ENCODE measurements at regions of chr12 and their contacts with region 1.

Region 1: DNA sequence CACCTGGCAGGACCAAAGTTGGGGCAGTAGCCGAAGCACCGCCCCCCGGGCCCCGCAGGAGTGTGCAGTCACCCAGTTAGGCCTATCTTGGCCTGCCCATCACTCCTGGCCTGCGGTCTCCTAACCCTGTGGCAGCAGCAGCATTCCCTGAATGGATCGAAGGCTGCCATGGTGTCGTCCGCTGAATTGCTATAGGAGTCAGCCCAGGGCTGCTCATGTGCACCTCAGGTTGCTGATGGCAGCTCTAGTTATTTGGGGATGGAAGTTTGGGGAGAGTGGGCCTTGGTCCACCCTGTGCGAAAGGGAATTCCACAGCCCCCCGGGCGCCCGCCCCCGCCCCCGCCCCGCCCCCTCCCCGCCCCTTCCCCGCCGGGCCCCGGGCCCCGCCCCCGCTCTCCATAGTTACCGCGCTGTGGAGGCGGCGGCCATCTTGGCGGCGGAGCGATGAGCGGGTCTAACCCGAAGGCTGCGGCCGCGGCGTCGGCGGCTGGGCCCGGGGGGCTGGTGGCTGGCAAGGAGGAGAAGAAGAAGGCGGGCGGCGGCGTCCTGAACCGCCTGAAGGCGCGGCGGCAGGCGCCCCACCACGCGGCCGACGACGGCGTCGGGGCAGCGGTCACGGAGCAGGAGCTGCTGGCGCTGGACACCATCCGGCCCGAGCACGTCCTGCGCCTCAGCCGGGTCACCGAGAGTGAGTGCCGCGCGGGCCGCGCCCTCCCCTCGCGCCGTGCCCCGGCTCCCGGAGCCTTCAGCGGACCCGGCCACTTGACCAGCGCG is at the start of gene UNC119B:
- DNase-seq: peak; percentile 72 to 79
- ATAC-seq: peak; percentile 85 to 95 (median 92)
- H3K4me3 ChIP-seq: peak within 1 kb of the TSS; percentile 50 to 96 (median 88)
- H3K27ac ChIP-seq: peak within 1 kb of the TSS; percentile 75 to 96 (median 92)
- H3K4me1 ChIP-seq: peaks cover 9 to 43% (median 31%) of the 10 kb centered on the region in 9 donors
- H3K27me3 ChIP-seq: no peaks in the 10 kb centered on the region
- CTCF ChIP-seq: no peak
- total RNA-seq, gene UNC119B: 5.9 to 15.4 (median 9.6) TPM

Region 2: GRCh38 chr12:120495723-120496412 is 214.3 kb before region 1 on chr12 and contains the start of gene DYNLL1:
- intact Hi-C with region 1: loop called in 1 of 10 experiments (anchors 5 kb)
- DNase-seq: peak; percentile 96 to 97
- ATAC-seq: peak; percentile 98 to 99 (median 99)
- H3K4me3 ChIP-seq: peak within 1 kb of the TSS; percentile 72 to 99 (median 96)
- H3K27ac ChIP-seq: peak within 1 kb of the TSS; percentile 24 to 97 (median 93)
- H3K4me1 ChIP-seq: peaks cover 6 to 38% (median 28%) of the 10 kb centered on the region in 9 donors
- H3K27me3 ChIP-seq: no peaks in the 10 kb centered on the region
- CTCF ChIP-seq: no peak
- total RNA-seq, gene DYNLL1: 94.0 to 227 (median 120) TPM

Region 3: GRCh38 chr12:120649442-120650232 is 60.6 kb before region 1 on chr12:
- intact Hi-C with region 1: loop called in 9 of 10 experiments (anchors 1 to 5 kb)
- DNase-seq: peak; percentile 16 to 51
- ATAC-seq: peak in 4 of 8 donors; percentile 1 to 29 (median 5)
- H3K4me3 ChIP-seq: peak overlapping the region; percentile 33 to 57 (median 48)
- H3K27ac ChIP-seq: peak overlapping the region; percentile 31 to 85 (median 68)
- H3K4me1 ChIP-seq: peaks cover 12 to 57% (median 46%) of the 10 kb centered on the region in 9 donors
- H3K27me3 ChIP-seq: peaks cover 0 to 38% (median 12%) of the 10 kb centered on the region in 7 donors
- CTCF ChIP-seq: peak in 3 of 9 donors; percentile 20 to 33 (median 21)

Region 4: DNA sequence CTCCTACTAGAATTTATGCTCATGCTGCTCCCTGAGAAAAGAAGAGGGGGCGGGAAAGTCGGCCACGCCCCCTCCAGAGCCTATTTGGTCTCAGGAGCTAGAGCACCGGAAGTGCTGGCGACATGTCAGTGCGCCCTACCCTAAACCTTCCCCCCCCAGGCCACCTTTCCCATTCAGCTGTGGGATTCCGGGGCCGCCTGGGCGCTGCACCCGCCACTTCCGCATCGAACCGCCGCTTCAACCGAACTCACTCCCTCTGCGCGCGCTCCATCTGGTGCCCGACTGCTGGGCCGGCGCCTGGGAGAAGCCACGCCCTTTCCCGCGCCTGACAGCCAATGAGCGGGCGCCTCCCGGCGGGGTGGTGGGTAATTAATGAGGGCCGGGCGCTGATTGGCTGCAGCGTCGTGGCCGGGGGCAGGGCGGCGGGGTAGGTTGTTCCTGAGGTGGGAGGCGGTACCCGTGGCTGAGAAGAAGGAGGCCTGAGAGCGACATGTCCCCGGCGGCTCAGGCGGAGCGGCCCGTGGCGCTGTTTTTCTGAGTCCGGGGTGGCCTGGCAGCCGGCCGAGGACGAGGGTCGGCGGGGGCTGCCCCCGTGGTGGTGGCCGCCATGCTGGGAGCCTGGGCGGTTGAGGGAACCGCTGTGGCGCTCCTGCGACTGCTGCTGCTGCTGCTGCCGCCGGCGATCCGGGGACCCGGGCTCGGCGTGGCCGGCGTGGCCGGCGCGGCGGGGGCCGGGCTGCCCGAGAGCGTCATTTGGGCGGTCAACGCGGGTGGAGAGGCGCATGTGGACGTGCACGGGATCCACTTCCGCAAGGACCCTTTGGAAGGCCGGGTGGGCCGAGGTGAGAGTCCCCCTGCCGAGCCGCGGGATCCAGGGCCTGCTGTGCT is 23.3 kb before region 1 on chr12 and contains the start of gene MLEC:
- intact Hi-C with region 1: loop called in 1 of 10 experiments (anchors 2 kb)
- DNase-seq: peak; percentile 98 to 99
- ATAC-seq: peak; percentile 92 to 97 (median 96)
- H3K4me3 ChIP-seq: peak within 1 kb of the TSS; percentile 68 to 98 (median 90)
- H3K27ac ChIP-seq: peak within 1 kb of the TSS; percentile 55 to 95 (median 92)
- H3K4me1 ChIP-seq: peaks cover 3 to 61% (median 48%) of the 10 kb centered on the region in 9 donors
- H3K27me3 ChIP-seq: no peaks in the 10 kb centered on the region
- CTCF ChIP-seq: peak in 4 of 9 donors; percentile 20 to 51 (median 40)
- total RNA-seq, gene MLEC: 95.1 to 179 (median 118) TPM

Region 5: DNA sequence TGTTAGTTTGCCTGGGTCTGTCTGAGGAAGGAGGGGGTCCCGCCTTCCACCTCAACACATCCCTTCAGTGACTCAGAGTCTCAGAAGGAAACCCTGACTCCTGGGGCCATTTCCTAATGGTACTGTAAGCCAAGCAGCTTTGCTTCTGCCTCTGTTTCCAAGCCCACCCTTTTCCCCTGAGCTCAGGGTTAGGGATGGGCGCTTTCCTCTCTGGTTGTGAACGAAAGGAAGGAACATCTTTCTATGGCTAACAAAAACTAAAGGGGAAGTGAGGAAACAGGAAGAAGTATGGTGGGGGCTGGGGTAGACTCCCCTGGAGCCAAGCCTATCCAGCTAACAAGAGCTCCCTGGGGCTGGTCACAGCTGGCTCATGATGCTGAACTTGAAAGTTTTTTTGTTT is 11.6 kb before region 1 on chr12:
- intact Hi-C with region 1: loop called in 1 of 10 experiments (anchors 2 kb)
- DNase-seq: peak in 1 of 2 donors; percentile 45
- ATAC-seq: peak; percentile 49 to 91 (median 76)
- H3K4me3 ChIP-seq: no peak overlapping the region
- H3K27ac ChIP-seq: peak overlapping the region; percentile 54 to 92 (median 84)
- H3K4me1 ChIP-seq: peaks cover 24 to 96% (median 76%) of the 10 kb centered on the region in 9 donors
- H3K27me3 ChIP-seq: no peaks in the 10 kb centered on the region
- CTCF ChIP-seq: no peak

Region 6: DNA sequence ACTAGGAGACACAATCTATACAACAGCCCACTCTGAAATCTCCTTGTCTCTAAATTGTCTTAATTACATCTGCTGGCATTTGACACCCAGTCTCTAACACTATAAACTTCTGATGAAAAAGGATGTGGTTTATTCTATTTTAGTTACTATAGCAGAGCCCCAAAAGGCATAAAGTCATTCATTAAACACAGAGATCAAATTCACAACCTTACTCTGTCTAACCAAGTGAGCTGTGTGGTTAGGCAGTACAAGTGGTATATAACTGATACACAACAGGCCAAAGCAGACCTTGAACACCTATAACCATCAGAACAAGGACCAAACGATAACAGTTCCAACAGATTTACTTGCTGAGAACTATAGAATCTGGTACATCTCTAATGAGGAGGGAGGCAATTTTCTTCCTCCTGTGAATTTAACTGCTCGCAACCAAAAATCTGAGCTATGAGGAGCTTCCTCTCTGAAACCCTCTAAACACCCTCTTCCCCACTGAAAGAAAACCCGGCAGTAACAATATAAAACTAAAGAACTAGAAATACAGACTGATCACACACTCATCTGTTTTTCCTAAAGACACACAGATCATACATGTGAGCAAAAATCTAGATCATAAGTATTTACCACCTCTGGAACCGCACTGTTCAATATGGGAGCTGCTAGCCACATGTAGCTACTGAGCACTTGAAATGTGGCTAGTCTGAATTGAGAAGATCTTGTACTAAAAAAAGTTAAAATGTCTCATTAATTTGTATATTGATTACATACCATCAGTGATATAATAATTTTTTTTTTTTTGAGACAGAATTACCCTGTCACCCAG is 176.2 kb after region 1 on chr12:
- intact Hi-C with region 1: no loop called
- DNase-seq: no peak
- ATAC-seq: no peak
- H3K4me3 ChIP-seq: no peak overlapping the region
- H3K27ac ChIP-seq: no peak overlapping the region
- H3K4me1 ChIP-seq: peaks cover 0 to 53% (median 36%) of the 10 kb centered on the region in 9 donors
- H3K27me3 ChIP-seq: no peaks in the 10 kb centered on the region
- CTCF ChIP-seq: no peak